ENCODE measurements at regions of chr4 and their contacts with region 1.

Region 1: DNA sequence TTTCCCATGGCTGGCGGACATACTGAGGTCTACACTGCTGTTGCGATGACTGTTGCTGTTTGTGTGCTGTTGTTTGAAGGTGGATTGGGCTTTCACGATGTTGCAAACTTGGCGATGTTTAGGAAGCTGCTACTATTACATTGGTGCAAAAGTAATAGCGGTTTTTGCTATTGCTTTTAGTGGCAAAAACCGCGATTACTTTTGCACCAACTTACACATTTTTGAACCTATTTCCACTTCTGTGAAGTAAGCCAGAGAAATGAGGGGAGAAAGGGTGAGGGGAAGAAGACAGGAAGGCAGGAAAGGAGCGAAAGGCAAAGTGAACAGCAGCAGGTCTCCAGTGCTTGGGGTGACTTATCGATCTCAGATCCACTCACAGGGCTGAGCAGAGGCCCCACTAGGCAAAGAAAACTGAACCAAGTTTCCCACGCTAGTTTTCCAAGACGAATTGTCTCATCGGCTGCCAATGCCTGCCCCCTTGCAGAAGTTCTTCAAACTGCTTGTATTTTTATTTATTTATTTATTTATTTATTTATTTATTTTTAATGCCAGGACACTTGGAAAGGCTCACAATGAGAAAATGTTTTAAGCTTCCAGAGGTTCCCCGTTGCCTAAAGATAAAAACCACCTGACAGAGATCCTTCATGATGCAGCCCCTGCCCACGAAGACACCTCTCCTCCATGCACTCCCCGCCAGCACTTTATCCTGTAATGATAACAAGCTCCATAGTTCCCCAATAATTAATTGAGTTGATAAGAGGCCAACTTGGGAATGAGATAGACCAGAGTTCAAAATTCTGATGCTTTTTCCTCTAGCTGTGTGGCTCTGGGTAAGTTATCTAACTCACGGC is 43.3 kb downstream of the QDPR start:
- DNase-seq: no peak
- ATAC-seq: no peak
- H3K4me3 ChIP-seq: no peak overlapping the region
- H3K4me3 Mint-ChIP-seq: no peak overlapping the region
- H3K27ac ChIP-seq: no peak overlapping the region
- H3K27ac Mint-ChIP-seq: no peak overlapping the region
- H3K4me1 ChIP-seq: no peaks in the 10 kb centered on the region
- H3K4me1 Mint-ChIP-seq: no peaks in the 10 kb centered on the region
- H3K27me3 ChIP-seq: no peaks in the 10 kb centered on the region
- H3K27me3 Mint-ChIP-seq: no peaks in the 10 kb centered on the region
- CTCF ChIP-seq: peak; percentile 27

Region 2: DNA sequence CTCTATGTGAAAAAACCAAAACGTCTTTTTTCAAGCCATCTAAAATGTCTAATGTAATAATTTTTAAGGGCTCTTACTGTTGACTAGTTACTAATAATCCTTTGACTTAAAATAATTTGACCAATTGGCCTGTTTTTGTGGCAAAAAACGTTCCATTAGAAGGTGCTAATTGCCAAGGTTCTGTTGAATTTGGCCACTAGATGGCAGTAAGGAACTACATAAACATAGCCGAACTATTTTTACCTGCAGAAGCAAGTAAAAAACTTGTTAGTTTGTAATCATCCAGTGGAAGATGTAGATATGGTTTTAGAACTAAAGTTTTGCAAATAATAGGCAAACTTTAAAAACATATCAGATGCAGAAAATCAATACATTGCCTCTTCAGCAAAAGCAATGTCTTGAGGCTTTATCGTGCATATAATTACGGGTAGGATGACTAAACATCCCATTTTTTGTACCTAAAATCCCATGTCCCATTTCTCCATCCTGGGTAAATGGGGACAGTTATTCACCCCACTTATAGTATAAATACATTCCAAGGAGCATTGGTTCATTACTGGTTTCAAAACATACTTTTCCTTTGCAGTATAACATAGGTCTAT is 1442.3 kb before region 1 on chr4:
- CTCF ChIA-PET with region 1: no interaction called
- POLR2A ChIA-PET with region 1: no interaction called
- intact Hi-C with region 1: loop called (anchors 2 kb)
- DNase-seq: peak; percentile 75
- ATAC-seq: peak; percentile 49
- H3K4me3 ChIP-seq: no peak overlapping the region
- H3K4me3 Mint-ChIP-seq: no peak overlapping the region
- H3K27ac ChIP-seq: no peak overlapping the region
- H3K27ac Mint-ChIP-seq: no peak overlapping the region
- H3K4me1 ChIP-seq: peaks cover 0 to under 1% of the 10 kb centered on the region in 2 donors
- H3K4me1 Mint-ChIP-seq: no peaks in the 10 kb centered on the region
- H3K27me3 ChIP-seq: peaks cover 0 to 6% (median 1%) of the 10 kb centered on the region in 4 experiments
- H3K27me3 Mint-ChIP-seq: peaks cover 21% of the 10 kb centered on the region
- CTCF ChIP-seq: peak; percentile 90

Region 3: GRCh38 chr4:18869166-18869565 is 1400.6 kb after region 1 on chr4:
- CTCF ChIA-PET with region 1: no interaction called
- POLR2A ChIA-PET with region 1: no interaction called
- intact Hi-C with region 1: no loop called
- DNase-seq: no peak
- ATAC-seq: no peak
- H3K4me3 ChIP-seq: no peak overlapping the region
- H3K4me3 Mint-ChIP-seq: no peak overlapping the region
- H3K27ac ChIP-seq: no peak overlapping the region
- H3K27ac Mint-ChIP-seq: no peak overlapping the region
- H3K4me1 ChIP-seq: no peaks in the 10 kb centered on the region
- H3K4me1 Mint-ChIP-seq: no peaks in the 10 kb centered on the region
- H3K27me3 ChIP-seq: no peaks in the 10 kb centered on the region
- H3K27me3 Mint-ChIP-seq: no peaks in the 10 kb centered on the region
- CTCF ChIP-seq: no peak